ENCODE measurements at regions of chr12 and their contacts with region 1.

Region 1: DNA sequence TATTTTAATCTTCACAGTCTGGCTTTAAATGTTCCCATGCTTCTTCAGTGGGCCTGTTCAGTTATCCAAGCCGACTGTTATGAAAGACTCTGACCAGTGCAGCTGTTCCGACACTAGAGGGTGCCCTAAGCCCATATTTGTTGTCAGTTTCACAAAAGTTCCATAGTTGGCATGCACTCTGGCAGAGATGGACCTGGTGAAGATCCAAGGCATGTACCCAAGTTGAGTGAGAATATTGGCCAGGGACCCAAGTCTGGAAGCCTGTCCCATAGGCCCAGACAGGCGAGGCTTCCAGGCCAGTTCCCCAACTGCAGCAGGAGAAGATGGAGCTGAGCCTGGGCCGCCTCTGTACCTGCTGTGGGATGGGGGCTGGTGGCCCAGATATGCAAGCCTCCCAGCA is 27.4 kb upstream of the GUCY2C start:
- DNase-seq: peak; percentile 65
- ATAC-seq: peak; percentile 56
- H3K4me3 ChIP-seq: no peak overlapping the region
- H3K4me3 Mint-ChIP-seq: no peak overlapping the region
- H3K27ac ChIP-seq: no peak overlapping the region
- H3K27ac Mint-ChIP-seq: no peak overlapping the region
- H3K4me1 ChIP-seq: no peaks in the 10 kb centered on the region
- H3K4me1 Mint-ChIP-seq: no peaks in the 10 kb centered on the region
- H3K27me3 ChIP-seq: no peaks in the 10 kb centered on the region
- H3K27me3 Mint-ChIP-seq: peaks cover 13% of the 10 kb centered on the region
- CTCF ChIP-seq: peak; percentile 79

Region 2: DNA sequence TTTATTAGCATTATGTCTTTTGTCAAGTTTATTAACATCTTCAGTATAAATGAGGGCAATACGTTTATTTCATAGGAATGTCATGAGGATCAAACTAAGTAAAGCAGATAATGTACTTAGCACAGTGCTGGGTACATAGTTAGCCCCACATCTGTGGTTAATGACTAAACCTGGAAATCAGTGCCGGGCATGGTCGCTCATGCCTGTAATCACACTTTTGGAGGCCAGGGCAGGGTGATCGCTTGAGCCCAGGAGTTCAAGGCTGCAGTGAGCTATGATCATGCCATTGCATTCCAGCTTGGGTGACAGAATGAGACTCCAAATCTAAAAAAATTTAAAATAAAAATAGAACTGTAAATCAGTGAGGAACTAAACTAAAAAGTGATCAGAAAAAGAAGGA is 17.4 kb after region 1 on chr12:
- CTCF ChIA-PET with region 1: interaction called, 11 read pairs
- POLR2A ChIA-PET with region 1: interaction called, 4 read pairs
- intact Hi-C with region 1: no loop called
- DNase-seq: no peak
- ATAC-seq: no peak
- H3K4me3 ChIP-seq: no peak overlapping the region
- H3K4me3 Mint-ChIP-seq: no peak overlapping the region
- H3K27ac ChIP-seq: no peak overlapping the region
- H3K27ac Mint-ChIP-seq: no peak overlapping the region
- H3K4me1 ChIP-seq: peaks cover 7 to 8% of the 10 kb centered on the region in 2 donors
- H3K4me1 Mint-ChIP-seq: peaks cover 5% of the 10 kb centered on the region
- H3K27me3 ChIP-seq: no peaks in the 10 kb centered on the region
- H3K27me3 Mint-ChIP-seq: no peaks in the 10 kb centered on the region
- CTCF ChIP-seq: no peak

Region 3: DNA sequence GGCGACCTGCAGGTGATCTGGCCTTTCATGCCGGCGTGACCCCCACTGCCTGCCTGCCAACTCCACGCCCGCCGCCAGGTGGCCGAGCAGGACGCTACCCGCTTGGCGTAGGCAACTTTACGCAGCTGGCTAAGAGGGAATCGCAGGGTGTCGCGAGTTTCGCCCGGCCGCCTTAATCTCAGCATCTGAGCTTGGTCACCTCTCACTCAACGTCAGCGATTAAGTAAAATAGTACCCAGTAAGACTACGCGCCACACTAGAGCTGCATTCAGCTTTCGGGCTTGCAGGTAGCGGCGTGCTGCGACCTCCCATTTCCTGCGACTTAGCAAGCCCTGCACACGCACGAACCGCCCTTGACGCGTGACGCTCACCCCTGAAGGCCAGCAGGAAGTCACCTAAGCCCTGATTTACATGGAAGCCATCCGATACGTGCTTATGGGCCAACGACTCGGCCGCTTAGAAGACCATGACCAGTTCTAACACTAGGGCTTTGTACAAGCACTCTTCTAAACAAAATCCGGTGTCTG is 46.3 kb after region 1 on chr12:
- CTCF ChIA-PET with region 1: no interaction called
- POLR2A ChIA-PET with region 1: no interaction called
- intact Hi-C with region 1: no loop called
- DNase-seq: peak; percentile 97
- ATAC-seq: peak; percentile 57
- H3K4me3 ChIP-seq: peak overlapping the region; percentile 78 to 98 (median 93)
- H3K4me3 Mint-ChIP-seq: peak overlapping the region; percentile 97
- H3K27ac ChIP-seq: peak overlapping the region; percentile 94 to 96
- H3K27ac Mint-ChIP-seq: peak overlapping the region; percentile 97
- H3K4me1 ChIP-seq: peaks cover 28 to 45% of the 10 kb centered on the region in 2 donors
- H3K4me1 Mint-ChIP-seq: peaks cover 55% of the 10 kb centered on the region
- H3K27me3 ChIP-seq: no peaks in the 10 kb centered on the region
- H3K27me3 Mint-ChIP-seq: no peaks in the 10 kb centered on the region
- CTCF ChIP-seq: peak; percentile 86

Region 4: DNA sequence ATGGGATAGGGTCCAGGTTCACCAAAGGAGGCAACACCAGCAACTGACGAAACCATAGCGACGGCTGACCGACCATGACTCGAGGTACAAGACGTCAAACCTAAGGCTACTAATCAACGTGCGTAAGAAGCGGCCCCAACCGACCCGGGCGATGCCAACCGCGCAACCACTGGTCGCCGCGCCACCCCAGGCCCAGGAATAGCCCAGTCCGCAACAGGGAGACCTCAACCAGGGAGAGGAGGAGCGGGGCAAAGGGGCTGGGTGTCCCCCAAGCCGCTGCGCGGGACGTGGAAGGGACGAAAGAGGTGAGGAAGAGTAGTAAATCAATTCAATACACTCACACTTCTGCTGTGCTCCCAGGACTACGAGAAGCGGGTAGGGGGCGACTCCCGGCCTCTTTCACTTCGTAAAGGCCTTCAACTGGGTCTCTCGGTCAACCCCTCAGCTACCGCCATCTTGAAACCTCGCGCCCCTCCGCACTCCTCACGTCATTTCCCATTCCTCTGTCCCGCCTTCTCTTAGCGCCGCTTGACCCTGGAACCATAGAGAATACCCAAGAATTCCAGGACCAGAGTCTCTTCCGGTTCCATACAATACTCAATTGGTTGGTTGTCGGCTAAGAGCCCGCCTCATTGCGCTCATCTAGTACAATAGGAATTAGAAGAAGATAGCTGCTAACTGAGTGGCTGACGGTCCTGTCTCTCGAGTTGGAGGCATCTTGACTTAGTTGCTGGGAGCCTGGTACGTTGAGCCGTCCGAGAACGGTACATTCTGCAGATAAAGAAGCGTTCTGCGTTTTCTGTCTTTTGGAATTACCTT is 79.5 kb after region 1 on chr12 and contains the starts of genes C12orf60 and WBP11:
- CTCF ChIA-PET with region 1: no interaction called
- POLR2A ChIA-PET with region 1: no interaction called
- intact Hi-C with region 1: no loop called
- DNase-seq: peak; percentile 96
- ATAC-seq: peak; percentile 94
- H3K4me3 ChIP-seq: peak within 1 kb of the TSS; percentile 89 to 99 (median 93)
- H3K4me3 Mint-ChIP-seq: no peak within 1 kb of the TSS
- H3K27ac ChIP-seq: peak within 1 kb of the TSS; percentile 98
- H3K27ac Mint-ChIP-seq: peak within 1 kb of the TSS; percentile 41
- H3K4me1 ChIP-seq: peaks cover 13 to 17% of the 10 kb centered on the region in 2 donors
- H3K4me1 Mint-ChIP-seq: peaks cover 11% of the 10 kb centered on the region
- H3K27me3 ChIP-seq: no peaks in the 10 kb centered on the region
- H3K27me3 Mint-ChIP-seq: no peaks in the 10 kb centered on the region
- CTCF ChIP-seq: no peak
- total RNA-seq, gene C12orf60: 1.2 and 1.4 TPM in 2 replicates
- total RNA-seq, gene WBP11: 77.3 and 84.7 TPM in 2 replicates

Region 5: DNA sequence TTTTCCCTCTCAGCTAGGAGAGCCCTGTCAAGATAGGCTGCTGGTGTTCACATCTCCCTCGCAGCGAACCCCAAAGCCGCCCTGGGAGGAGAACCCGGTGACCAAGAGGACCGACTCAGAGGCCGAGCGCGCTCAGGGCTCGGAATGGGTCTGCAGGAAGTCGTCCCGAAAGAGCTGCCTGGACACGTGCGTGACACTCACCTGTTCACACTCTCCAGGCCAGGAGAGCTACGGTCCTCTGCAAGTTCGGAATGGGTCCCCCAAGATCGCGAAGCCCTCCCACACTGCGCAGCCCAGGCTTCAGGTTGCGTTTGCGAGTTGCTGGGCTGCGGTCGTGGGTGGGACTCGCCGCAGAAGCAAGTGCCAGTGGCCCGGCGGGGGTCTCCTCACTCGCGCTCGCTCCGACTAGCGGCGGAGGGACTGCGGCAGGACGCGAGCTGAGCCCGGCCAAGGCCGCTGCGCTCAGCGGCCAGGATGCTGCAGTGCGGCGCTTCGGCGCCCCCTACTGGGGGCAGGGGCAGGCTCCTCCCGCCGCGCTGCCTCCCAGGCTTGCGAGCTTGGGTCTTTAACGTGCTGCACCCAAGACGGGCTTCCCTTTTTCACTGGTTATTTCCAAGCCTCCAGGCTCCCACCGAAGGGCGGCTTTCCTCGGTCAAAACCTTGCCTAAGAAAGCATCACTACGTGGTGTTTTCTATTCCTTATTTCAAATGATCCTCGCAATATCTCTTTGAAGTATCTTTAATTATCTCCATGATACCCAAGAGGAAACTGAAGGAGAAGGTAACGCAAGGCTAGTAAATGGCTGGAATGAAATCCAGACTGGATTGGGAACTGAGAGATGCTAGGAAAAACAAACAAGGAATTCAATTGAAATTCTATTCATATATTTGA is 497.5 kb after region 1 on chr12 and contains the start of gene RERG:
- CTCF ChIA-PET with region 1: interaction called, 16 read pairs
- POLR2A ChIA-PET with region 1: no interaction called
- intact Hi-C with region 1: loop called (anchors 1 kb)
- DNase-seq: peak; percentile 77
- ATAC-seq: peak; percentile 98
- H3K4me3 ChIP-seq: peak within 1 kb of the TSS in 4 of 5 experiments; percentile 29 to 49 (median 41)
- H3K4me3 Mint-ChIP-seq: peak within 1 kb of the TSS; percentile 79
- H3K27ac ChIP-seq: no peak within 1 kb of the TSS
- H3K27ac Mint-ChIP-seq: no peak within 1 kb of the TSS
- H3K4me1 ChIP-seq: peaks cover 11 to 16% of the 10 kb centered on the region in 2 donors
- H3K4me1 Mint-ChIP-seq: peaks cover 14% of the 10 kb centered on the region
- H3K27me3 ChIP-seq: peaks cover 0 to 39% (median 34%) of the 10 kb centered on the region in 4 experiments
- H3K27me3 Mint-ChIP-seq: peaks cover 44% of the 10 kb centered on the region
- CTCF ChIP-seq: peak; percentile 95
- total RNA-seq, gene RERG: not detected in 2 replicates

Region 6: GRCh38 chr12:15268927-15269552 is 545.3 kb after region 1 on chr12:
- CTCF ChIA-PET with region 1: interaction called, 21 read pairs
- POLR2A ChIA-PET with region 1: no interaction called
- intact Hi-C with region 1: no loop called
- DNase-seq: peak; percentile 63
- ATAC-seq: peak; percentile 71
- H3K4me3 ChIP-seq: no peak overlapping the region
- H3K4me3 Mint-ChIP-seq: no peak overlapping the region
- H3K27ac ChIP-seq: no peak overlapping the region
- H3K27ac Mint-ChIP-seq: no peak overlapping the region
- H3K4me1 ChIP-seq: no peaks in the 10 kb centered on the region
- H3K4me1 Mint-ChIP-seq: no peaks in the 10 kb centered on the region
- H3K27me3 ChIP-seq: no peaks in the 10 kb centered on the region
- H3K27me3 Mint-ChIP-seq: peaks cover 3% of the 10 kb centered on the region
- CTCF ChIP-seq: peak; percentile 97

Measured in B cell (primary cell).